ENCODE measurements at regions of chr1 and their contacts with region 1.

Region 1: DNA sequence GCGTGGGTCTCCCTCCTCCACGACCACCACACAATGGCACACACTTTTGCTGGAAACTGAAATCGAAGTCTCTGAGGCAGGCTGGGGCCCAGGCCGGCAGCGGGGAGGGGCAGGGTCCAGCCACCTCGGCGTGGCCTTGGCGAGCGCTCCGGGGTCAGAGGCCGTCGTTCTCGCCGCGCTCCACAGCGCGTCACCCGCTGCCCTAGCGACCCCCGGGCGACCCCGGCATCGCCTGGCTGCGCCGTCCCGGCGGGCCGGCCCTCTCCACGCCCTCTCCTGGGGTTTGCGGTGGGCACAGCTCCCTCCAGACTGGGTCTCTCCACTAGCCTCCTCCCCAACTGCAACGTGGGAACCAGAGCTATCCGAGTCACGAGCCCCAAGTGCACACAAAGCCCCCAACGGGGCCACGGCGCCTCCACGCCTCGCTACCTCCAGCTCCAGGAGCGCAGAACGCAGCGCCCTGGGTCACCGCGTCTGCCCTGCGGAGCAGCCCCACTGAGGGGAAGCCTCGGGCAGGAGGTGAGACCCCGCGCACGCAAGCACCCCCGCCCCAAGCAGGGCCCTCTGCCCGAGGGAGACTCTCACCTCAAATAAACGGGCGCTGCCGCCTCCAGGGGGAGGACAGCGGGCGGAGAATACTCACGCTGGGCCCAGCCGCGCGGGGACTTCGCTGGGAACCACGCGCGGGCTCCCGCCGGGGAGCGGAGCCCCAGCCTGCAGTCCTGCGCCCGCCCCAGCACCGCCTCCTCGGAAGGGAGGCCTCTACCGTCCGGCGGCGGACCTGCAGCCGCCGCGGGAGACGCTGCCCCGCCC is 134.0 kb upstream of the BARHL2 start:
- DNase-seq: peak; percentile 82
- H3K4me3 ChIP-seq: peak overlapping the region; percentile 71
- H3K27ac ChIP-seq: no peak overlapping the region
- H3K4me1 ChIP-seq: no peaks in the 10 kb centered on the region
- H3K27me3 ChIP-seq: no peaks in the 10 kb centered on the region
- CTCF ChIP-seq: peak; percentile 86

Region 2: DNA sequence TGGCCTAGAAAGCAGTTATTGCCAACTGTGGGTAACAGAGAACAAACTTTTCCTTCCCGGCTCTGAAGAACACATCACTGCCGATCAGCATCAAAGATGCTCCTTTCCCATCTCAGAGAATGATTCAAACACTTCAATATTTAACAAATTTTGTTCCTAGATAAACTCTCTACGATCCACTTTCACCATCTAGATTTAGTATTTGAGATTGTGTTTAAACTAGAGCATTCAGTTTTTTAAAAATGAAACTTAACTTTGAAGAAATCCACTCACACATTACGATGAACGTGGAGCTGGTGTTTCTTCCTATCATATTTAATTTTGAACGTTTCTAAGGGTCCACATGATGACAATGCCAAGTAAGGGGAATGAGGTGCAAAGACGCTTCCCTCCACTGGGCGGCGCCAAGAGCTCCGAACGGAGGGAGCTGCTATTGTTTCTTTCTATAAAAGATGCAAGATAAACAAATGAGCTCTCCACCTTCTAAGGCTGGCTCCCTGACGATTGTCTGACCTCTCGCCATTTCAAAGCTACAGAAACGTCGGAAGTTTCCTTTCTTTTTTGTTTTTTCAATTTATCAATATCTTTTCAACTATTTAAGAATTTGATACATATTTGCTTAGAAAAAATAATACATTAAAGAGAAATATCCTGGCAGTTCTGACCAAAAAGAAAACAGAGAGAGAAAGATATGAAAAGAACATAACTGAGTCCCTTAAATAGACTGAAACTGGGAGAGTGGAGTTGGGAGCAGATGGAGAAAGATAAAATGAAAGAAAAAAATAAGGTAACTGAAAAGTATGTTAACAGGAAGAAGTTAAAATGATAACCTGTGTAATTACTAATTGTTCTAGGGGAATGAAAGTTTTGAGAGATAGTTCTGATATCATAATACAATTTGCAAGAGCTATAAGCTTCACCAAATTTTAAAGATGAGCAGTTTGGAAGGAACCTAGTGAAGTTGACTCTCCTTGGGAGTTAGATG is 129.6 kb before region 1 on chr1:
- intact Hi-C with region 1: loop called (anchors 5 kb)
- DNase-seq: peak; percentile 62
- H3K4me3 ChIP-seq: no peak overlapping the region
- H3K27ac ChIP-seq: no peak overlapping the region
- H3K4me1 ChIP-seq: peaks cover 5% of the 10 kb centered on the region
- H3K27me3 ChIP-seq: peaks cover 92% of the 10 kb centered on the region
- CTCF ChIP-seq: peak; percentile 67

Region 3: DNA sequence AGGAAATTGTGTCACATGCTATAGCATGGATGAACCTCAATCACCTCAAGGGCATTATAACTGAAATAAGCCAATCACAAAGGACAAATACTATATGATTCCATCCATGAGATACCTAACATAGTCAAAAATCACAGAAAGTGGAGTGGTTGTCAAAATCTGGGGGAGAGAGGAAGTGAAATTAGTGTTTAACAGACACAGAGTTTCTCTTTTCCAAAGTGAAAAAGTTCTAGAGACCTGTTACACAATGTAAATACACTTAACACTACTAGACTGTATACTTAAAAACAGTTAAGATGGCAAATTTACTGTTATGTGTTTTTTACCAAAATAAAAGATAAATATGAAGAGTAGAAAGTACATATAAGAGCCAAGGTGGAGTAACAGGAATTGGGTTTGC is 138.9 kb after region 1 on chr1:
- intact Hi-C with region 1: loop called (anchors 10 kb)
- DNase-seq: no peak
- H3K4me3 ChIP-seq: no peak overlapping the region
- H3K27ac ChIP-seq: no peak overlapping the region
- H3K4me1 ChIP-seq: no peaks in the 10 kb centered on the region
- H3K27me3 ChIP-seq: no peaks in the 10 kb centered on the region
- CTCF ChIP-seq: no peak